Tibial artery (tissue), 4 donors: ENCODE measurements at regions of chr9 and their contacts with region 1.

Region 1: DNA sequence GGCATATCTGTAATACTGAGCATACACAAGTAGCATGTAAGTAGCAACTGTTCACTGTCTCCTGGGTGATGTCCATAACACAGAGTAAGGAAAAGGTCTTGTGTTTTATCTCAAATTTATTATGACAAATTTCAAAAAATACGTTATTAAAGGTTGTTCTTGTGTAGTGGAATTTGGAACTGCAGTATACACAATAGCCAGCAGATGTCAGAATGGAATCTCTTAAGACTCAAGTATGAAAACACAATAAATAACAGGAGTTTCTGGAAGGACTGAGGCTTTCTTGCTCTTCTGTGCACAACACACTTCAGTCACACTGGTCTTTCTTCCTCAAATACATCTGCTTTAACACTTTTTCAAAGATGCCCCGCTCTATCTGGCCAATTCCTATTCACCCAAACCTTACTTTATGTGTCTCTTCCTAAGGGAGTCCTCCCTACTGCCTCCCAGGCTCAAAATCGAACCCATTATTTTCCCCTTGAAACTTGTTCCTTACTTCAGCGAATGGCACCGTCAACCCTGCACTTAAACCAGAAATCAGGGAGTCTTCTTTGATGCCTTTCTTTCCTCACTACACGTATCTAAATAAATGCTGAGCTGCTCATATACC is 6.5 kb upstream of the FBXO10 start:
- DNase-seq: no peak
- H3K4me3 ChIP-seq: no peak overlapping the region
- H3K27ac ChIP-seq: no peak overlapping the region
- H3K4me1 ChIP-seq: peaks cover 0 to 6% (median 0%) of the 10 kb centered on the region in 4 donors
- H3K27me3 ChIP-seq: no peaks in the 10 kb centered on the region
- CTCF ChIP-seq: peak; percentile 64 to 69

Region 2: DNA sequence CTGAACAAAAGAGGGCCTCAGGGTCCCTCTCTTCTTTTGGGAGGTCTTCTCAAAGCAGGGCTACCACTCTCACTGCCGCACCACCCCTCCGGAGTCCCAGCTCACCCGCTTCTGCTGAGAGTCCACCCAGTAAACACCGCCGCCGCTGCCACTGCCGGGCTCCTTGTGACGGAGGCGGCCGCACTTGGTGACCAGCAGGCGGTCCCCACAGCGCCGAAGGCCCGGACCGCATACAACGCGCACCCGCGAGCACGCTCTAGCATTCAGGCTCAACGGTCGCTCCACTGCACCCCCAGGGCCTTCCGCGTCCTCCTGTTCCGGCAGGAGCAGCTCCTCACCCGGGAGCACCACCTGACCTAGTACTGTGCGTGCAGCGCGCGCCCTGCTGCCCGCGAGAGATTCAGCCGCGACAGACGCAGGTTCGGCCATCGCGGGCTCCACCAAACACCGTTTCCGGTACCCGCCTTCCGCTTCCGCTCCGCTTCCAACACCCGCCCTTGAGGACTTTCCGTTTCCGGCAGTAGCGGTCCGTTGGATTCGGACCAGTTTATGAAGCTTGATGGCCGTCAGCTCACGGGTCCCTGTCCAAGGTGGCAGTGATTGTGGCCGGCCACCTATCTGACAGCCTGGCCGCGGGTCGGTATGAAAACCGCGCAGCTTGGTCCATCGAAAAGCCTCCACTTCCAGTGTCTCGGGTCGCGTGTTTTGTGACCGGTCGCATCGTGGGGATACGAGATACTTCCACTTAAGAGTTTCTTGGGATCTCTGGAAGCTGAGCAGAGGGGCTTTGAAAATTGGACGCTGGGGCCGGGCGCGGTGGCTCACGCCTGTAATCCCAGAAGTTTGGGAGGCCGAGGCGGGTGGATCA is 202.2 kb after region 1 on chr9 and contains the start of gene EXOSC3:
- intact Hi-C with region 1: loop called (anchors 10 kb)
- DNase-seq: peak; percentile 85 to 92
- H3K4me3 ChIP-seq: peak within 1 kb of the TSS; percentile 74 to 98
- H3K27ac ChIP-seq: peak within 1 kb of the TSS; percentile 80 to 84
- H3K4me1 ChIP-seq: peaks cover 0 to 28% (median 16%) of the 10 kb centered on the region in 4 donors
- H3K27me3 ChIP-seq: peaks cover 0 to 4% of the 10 kb centered on the region in 2 donors
- CTCF ChIP-seq: no peak

Region 3: GRCh38 chr9:37836386-37836785 is 253.7 kb after region 1 on chr9:
- intact Hi-C with region 1: no loop called
- DNase-seq: no peak
- H3K4me3 ChIP-seq: no peak overlapping the region
- H3K27ac ChIP-seq: no peak overlapping the region
- H3K4me1 ChIP-seq: no peaks in the 10 kb centered on the region
- H3K27me3 ChIP-seq: no peaks in the 10 kb centered on the region
- CTCF ChIP-seq: no peak